CD8-positive, alpha-beta memory T cell (primary cell): ENCODE measurements at regions of chr16 and their contacts with region 1.

Region 1: GRCh38 chr16:3023669-3024478 is at the starts of genes HCFC1R1 and THOC6:
- DNase-seq: peak; percentile 91 to 97 (median 94)
- H3K4me3 ChIP-seq: peak within 1 kb of the TSS; percentile 88
- H3K4me3 Mint-ChIP-seq: peak within 1 kb of the TSS; percentile 87 to 98 (median 93)
- H3K27ac ChIP-seq: peak within 1 kb of the TSS; percentile 88
- H3K27ac Mint-ChIP-seq: peak within 1 kb of the TSS; percentile 78 to 97 (median 96)
- H3K4me1 ChIP-seq: peaks cover 46% of the 10 kb centered on the region
- H3K4me1 Mint-ChIP-seq: peaks cover 42 to 66% (median 48%) of the 10 kb centered on the region in 3 donors
- H3K27me3 ChIP-seq: peaks cover under 1% of the 10 kb centered on the region
- H3K27me3 Mint-ChIP-seq: peaks cover 0 to 3% of the 10 kb centered on the region in 2 donors
- total RNA-seq, gene HCFC1R1: 25.6 to 26.3 TPM
- total RNA-seq, gene THOC6: 56.8 to 59.4 TPM

Region 2: GRCh38 chr16:3003582-3004302 is 20.1 kb before region 1 on chr16:
- CTCF ChIA-PET with region 1: interaction called, 289 read pairs
- POLR2A ChIA-PET with region 1: interaction called, 7 read pairs
- DNase-seq: peak; percentile 91 to 97 (median 96)
- H3K4me3 ChIP-seq: no peak overlapping the region
- H3K4me3 Mint-ChIP-seq: peak overlapping the region; percentile 66 to 88 (median 79)
- H3K27ac ChIP-seq: no peak overlapping the region
- H3K27ac Mint-ChIP-seq: peak overlapping the region in 4 of 8 donors; percentile 8 to 79 (median 50)
- H3K4me1 ChIP-seq: peaks cover 18% of the 10 kb centered on the region
- H3K4me1 Mint-ChIP-seq: peaks cover 22 to 31% (median 27%) of the 10 kb centered on the region in 3 donors
- H3K27me3 ChIP-seq: no peaks in the 10 kb centered on the region
- H3K27me3 Mint-ChIP-seq: peaks cover 8 to 13% of the 10 kb centered on the region in 2 donors

Region 3: GRCh38 chr16:3045357-3045728 is 21.5 kb after region 1 on chr16:
- CTCF ChIA-PET with region 1: interaction called, 119 read pairs
- POLR2A ChIA-PET with region 1: interaction called, 4 read pairs
- DNase-seq: no peak
- H3K4me3 ChIP-seq: peak overlapping the region; percentile 51
- H3K4me3 Mint-ChIP-seq: peak overlapping the region; percentile 56 to 89 (median 83)
- H3K27ac ChIP-seq: no peak overlapping the region
- H3K27ac Mint-ChIP-seq: peak overlapping the region in 3 of 8 donors; percentile 36 to 50 (median 42)
- H3K4me1 ChIP-seq: peaks cover 27% of the 10 kb centered on the region
- H3K4me1 Mint-ChIP-seq: peaks cover 14 to 33% (median 24%) of the 10 kb centered on the region in 3 donors
- H3K27me3 ChIP-seq: peaks cover 45% of the 10 kb centered on the region
- H3K27me3 Mint-ChIP-seq: peaks cover 14 to 34% of the 10 kb centered on the region in 2 donors